ENCODE measurements at regions of chr1 and their contacts with region 1.

Region 1: GRCh38 chr1:220511768-220512167 is 16.2 kb upstream of the MARK1 start:
- DNase-seq: peak; percentile 13
- ATAC-seq: peak; percentile 92
- H3K4me3 ChIP-seq: no peak overlapping the region
- H3K27ac ChIP-seq: no peak overlapping the region
- H3K4me1 ChIP-seq: no peaks in the 10 kb centered on the region
- H3K27me3 ChIP-seq: no peaks in the 10 kb centered on the region; a peak in 1 of 5 replicates
- CTCF ChIP-seq: 0 out of 2 replicates have a peak, but pooled peaks have one; percentile 8
- EP300 ChIP-seq: no peak
- POLR2A ChIP-seq: no peak
- RAD21 ChIP-seq: no peak

Region 2: GRCh38 chr1:220296981-220297380 is 214.8 kb before region 1 on chr1:
- CTCF ChIA-PET with region 1: no interaction called
- POLR2A ChIA-PET with region 1: no interaction called
- in situ Hi-C with region 1: no loop called
- intact Hi-C with region 1: loop called (anchors 1 kb)
- DNase-seq: no peak
- ATAC-seq: no peak
- H3K4me3 ChIP-seq: no peak overlapping the region
- H3K27ac ChIP-seq: no peak overlapping the region
- H3K4me1 ChIP-seq: no peaks in the 10 kb centered on the region
- H3K27me3 ChIP-seq: peaks cover 0 to 8% of the 10 kb centered on the region in 2 experiments; a peak in 1 of 5 replicates
- CTCF ChIP-seq: no peak
- EP300 ChIP-seq: no peak
- POLR2A ChIP-seq: no peak
- RAD21 ChIP-seq: no peak

Region 3: GRCh38 chr1:220370031-220370700 is 141.6 kb before region 1 on chr1:
- CTCF ChIA-PET with region 1: no interaction called
- POLR2A ChIA-PET with region 1: no interaction called
- in situ Hi-C with region 1: no loop called
- intact Hi-C with region 1: loop called (anchors 5 kb)
- DNase-seq: no peak
- ATAC-seq: no peak
- H3K4me3 ChIP-seq: no peak overlapping the region
- H3K27ac ChIP-seq: no peak overlapping the region
- H3K4me1 ChIP-seq: no peaks in the 10 kb centered on the region
- H3K27me3 ChIP-seq: no peaks in the 10 kb centered on the region
- CTCF ChIP-seq: no peak
- EP300 ChIP-seq: no peak
- POLR2A ChIP-seq: no peak
- RAD21 ChIP-seq: no peak

Measured in HepG2 (cell line).